ENCODE measurements at regions of chr5 and their contacts with region 1.

Region 1: DNA sequence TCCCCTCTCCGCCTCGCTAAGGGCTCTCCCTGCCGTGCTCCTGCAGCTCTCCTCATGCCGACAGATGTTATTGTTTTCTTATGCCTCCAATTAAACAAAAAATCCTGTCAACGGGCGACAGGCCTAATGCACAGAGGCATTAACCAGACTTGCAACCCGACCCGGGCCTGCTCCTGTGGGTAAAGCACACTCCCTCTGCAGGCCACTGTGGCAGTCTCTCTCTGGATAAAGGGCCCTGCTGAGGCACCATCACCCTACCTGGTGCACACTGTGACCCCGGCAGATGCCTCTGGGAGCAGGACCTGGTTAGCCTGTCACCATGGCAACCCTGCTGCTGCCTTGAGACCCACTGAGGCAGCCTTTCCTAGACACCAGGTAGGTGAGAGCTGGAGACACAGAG is 27.6 kb upstream of the HAND1 start:
- DNase-seq: peak; percentile 83
- H3K4me3 ChIP-seq: no peak overlapping the region
- H3K27ac ChIP-seq: peak overlapping the region in 1 of 2 experiments; percentile 92; a peak in 2 of 4 replicates
- H3K4me1 ChIP-seq: peaks cover 0 to 28% of the 10 kb centered on the region in 2 experiments; a peak in 2 of 4 replicates
- H3K27me3 ChIP-seq: no peaks in the 10 kb centered on the region; the same call in none of the 2 replicates
- CTCF ChIP-seq: no peak
- EP300 ChIP-seq: peak in 1 of 2 experiments; percentile 86; a peak in 2 of 4 replicates
- RAD21 ChIP-seq: peak; percentile 55

Region 2: GRCh38 chr5:154478224-154478565 is 27.4 kb before region 1 on chr5 and contains the start of gene HAND1:
- CTCF ChIA-PET with region 1: interaction called, 6 read pairs
- POLR2A ChIA-PET with region 1: interaction called, 24 read pairs
- DNase-seq: peak; percentile 99
- H3K4me3 ChIP-seq: peak within 1 kb of the TSS; percentile 60 to 74
- H3K27ac ChIP-seq: peak within 1 kb of the TSS in 1 of 2 experiments; percentile 96; a peak in 2 of 4 replicates
- H3K4me1 ChIP-seq: peaks cover 0 to 46% of the 10 kb centered on the region in 2 experiments; a peak in 1 of 4 replicates
- H3K27me3 ChIP-seq: peaks cover 94% of the 10 kb centered on the region
- CTCF ChIP-seq: no peak
- EP300 ChIP-seq: no peak; a peak in 1 of 4 replicates
- RAD21 ChIP-seq: 0 out of 2 replicates have a peak, but pooled peaks have one; percentile 24
- polyA plus RNA-seq, gene HAND1: 1.1 and 2.6 TPM in 2 replicates

Region 3: GRCh38 chr5:154487541-154487940 is 18.1 kb before region 1 on chr5:
- CTCF ChIA-PET with region 1: interaction called, 36 read pairs
- POLR2A ChIA-PET with region 1: interaction called, 9 read pairs
- DNase-seq: peak; percentile 81
- H3K4me3 ChIP-seq: no peak overlapping the region
- H3K27ac ChIP-seq: peak overlapping the region in 1 of 2 experiments; percentile 100; a peak in 2 of 4 replicates
- H3K4me1 ChIP-seq: peaks cover 0 to 50% of the 10 kb centered on the region in 2 experiments; a peak in 2 of 4 replicates
- H3K27me3 ChIP-seq: peaks cover 50% of the 10 kb centered on the region
- CTCF ChIP-seq: no peak
- EP300 ChIP-seq: peak in 1 of 2 experiments; percentile 99; a peak in 2 of 4 replicates
- RAD21 ChIP-seq: peak; percentile 33; the same call in 1 of the 2 replicates

Region 4: GRCh38 chr5:154840435-154841272 is 335.0 kb after region 1 on chr5:
- CTCF ChIA-PET with region 1: no interaction called
- POLR2A ChIA-PET with region 1: no interaction called
- DNase-seq: no peak
- H3K4me3 ChIP-seq: no peak overlapping the region
- H3K27ac ChIP-seq: no peak overlapping the region
- H3K4me1 ChIP-seq: peaks cover 4 to 8% of the 10 kb centered on the region in 2 experiments; a peak in 3 of 4 replicates
- H3K27me3 ChIP-seq: no peaks in the 10 kb centered on the region
- CTCF ChIP-seq: no peak
- EP300 ChIP-seq: no peak
- RAD21 ChIP-seq: no peak